ENCODE measurements at regions of chr17 and their contacts with region 1.

Region 1: GRCh38 chr17:40791787-40792436 is 7.8 kb downstream of the KRT28 start:
- DNase-seq: no peak
- ATAC-seq: peak; percentile 60 to 72
- H3K4me3 ChIP-seq: no peak overlapping the region
- H3K27ac ChIP-seq: no peak overlapping the region
- H3K4me1 ChIP-seq: no peaks in the 10 kb centered on the region
- H3K27me3 ChIP-seq: no peaks in the 10 kb centered on the region

Region 2: GRCh38 chr17:40615295-40615988 is 176.5 kb before region 1 on chr17:
- intact Hi-C with region 1: loop called in 3 of 4 experiments (anchors 5 to 10 kb)
- DNase-seq: peak; percentile 42 to 79 (median 67)
- ATAC-seq: peak; percentile 53 to 54
- H3K4me3 ChIP-seq: no peak overlapping the region
- H3K27ac ChIP-seq: no peak overlapping the region
- H3K4me1 ChIP-seq: peaks cover 3% of the 10 kb centered on the region
- H3K27me3 ChIP-seq: no peaks in the 10 kb centered on the region

Region 3: GRCh38 chr17:40622509-40622928 is 169.4 kb before region 1 on chr17:
- intact Hi-C with region 1: loop called in 3 of 4 experiments (anchors 5 to 10 kb)
- DNase-seq: no peak
- ATAC-seq: no peak
- H3K4me3 ChIP-seq: no peak overlapping the region
- H3K27ac ChIP-seq: no peak overlapping the region
- H3K4me1 ChIP-seq: peaks cover 3% of the 10 kb centered on the region
- H3K27me3 ChIP-seq: no peaks in the 10 kb centered on the region

Region 4: DNA sequence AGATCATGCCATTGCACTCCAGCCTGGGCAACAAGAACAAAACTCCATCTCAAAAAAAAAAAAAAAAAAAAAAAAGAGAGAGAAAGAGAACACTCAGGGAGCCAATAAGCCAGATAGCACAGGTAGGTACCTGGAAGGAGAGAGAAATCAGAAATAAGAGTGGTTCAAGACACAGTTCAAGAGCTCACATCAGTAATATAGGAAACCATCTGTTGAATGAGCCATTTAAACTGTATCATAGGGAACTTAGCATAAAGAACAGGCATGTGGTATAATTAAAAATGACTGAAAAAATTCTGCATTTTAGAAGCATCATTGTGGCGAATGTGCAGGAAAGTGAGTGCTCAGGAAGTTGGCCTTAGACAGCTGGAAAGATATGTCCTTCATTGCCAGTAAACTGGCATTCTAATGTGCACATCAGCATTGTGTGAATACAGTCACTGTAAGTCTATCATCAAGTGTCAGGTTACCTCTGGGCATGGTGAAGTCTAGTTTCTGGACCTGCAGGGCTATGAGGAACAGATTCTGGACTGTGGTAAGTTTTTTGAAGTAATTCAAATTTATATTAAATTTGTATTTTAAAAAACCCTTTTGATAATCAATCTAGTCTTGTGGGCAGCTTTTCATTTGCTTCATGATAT is 54.7 kb after region 1 on chr17:
- intact Hi-C with region 1: no loop called
- DNase-seq: no peak
- ATAC-seq: no peak
- H3K4me3 ChIP-seq: no peak overlapping the region
- H3K27ac ChIP-seq: no peak overlapping the region
- H3K4me1 ChIP-seq: no peaks in the 10 kb centered on the region
- H3K27me3 ChIP-seq: no peaks in the 10 kb centered on the region

Region 5: GRCh38 chr17:41367426-41368075 is 575.6 kb after region 1 on chr17:
- intact Hi-C with region 1: no loop called
- DNase-seq: no peak
- ATAC-seq: no peak
- H3K4me3 ChIP-seq: no peak overlapping the region
- H3K27ac ChIP-seq: no peak overlapping the region
- H3K4me1 ChIP-seq: no peaks in the 10 kb centered on the region
- H3K27me3 ChIP-seq: no peaks in the 10 kb centered on the region